ENCODE measurements at regions of chr9 and their contacts with region 1.

Region 1: GRCh38 chr9:14616188-14616982 is 76.8 kb downstream of the ZDHHC21 start:
- DNase-seq: peak; percentile 32
- ATAC-seq: peak; percentile 64; the same call in 1 of the 2 replicates
- H3K4me3 ChIP-seq: no peak overlapping the region
- H3K27ac ChIP-seq: no peak overlapping the region
- H3K4me1 ChIP-seq: no peaks in the 10 kb centered on the region
- H3K27me3 ChIP-seq: no peaks in the 10 kb centered on the region
- CTCF ChIP-seq: peak; percentile 57 to 73 (median 59); a peak in 5 of 6 replicates
- POLR2A ChIP-seq: no peak
- RAD21 ChIP-seq: peak; percentile 60

Region 2: GRCh38 chr9:13770956-13771355 is 845.4 kb before region 1 on chr9:
- CTCF ChIA-PET with region 1: no interaction called
- POLR2A ChIA-PET with region 1: no interaction called
- RAD21 ChIA-PET with region 1: no interaction called
- intact Hi-C with region 1: no loop called
- DNase-seq: no peak
- ATAC-seq: no peak
- H3K4me3 ChIP-seq: no peak overlapping the region
- H3K27ac ChIP-seq: no peak overlapping the region
- H3K4me1 ChIP-seq: no peaks in the 10 kb centered on the region
- H3K27me3 ChIP-seq: no peaks in the 10 kb centered on the region
- CTCF ChIP-seq: no peak
- POLR2A ChIP-seq: no peak
- RAD21 ChIP-seq: no peak

Region 3: DNA sequence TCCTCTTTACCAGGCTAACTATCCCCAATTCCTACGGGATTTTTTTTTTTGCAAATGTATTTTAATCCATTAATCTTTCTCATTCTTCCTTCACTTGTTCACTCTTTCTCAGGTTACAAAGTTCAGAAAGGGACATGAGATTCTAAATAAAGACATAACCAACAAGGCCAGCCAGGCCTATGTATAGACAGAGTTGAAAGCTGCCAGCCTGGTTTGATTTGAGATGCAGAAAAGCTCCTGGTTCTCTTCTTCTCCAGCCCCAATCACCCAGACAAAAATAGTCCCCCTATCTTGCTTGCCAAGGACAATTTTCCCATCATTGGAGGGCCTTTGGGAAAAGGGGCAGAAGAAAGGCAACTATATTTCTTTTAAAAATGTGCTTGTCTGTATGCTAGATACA is 701.3 kb before region 1 on chr9:
- CTCF ChIA-PET with region 1: no interaction called
- POLR2A ChIA-PET with region 1: no interaction called
- RAD21 ChIA-PET with region 1: no interaction called
- intact Hi-C with region 1: no loop called
- DNase-seq: no peak
- ATAC-seq: no peak
- H3K4me3 ChIP-seq: no peak overlapping the region
- H3K27ac ChIP-seq: no peak overlapping the region
- H3K4me1 ChIP-seq: no peaks in the 10 kb centered on the region
- H3K27me3 ChIP-seq: no peaks in the 10 kb centered on the region
- CTCF ChIP-seq: no peak
- POLR2A ChIP-seq: no peak
- RAD21 ChIP-seq: no peak

Region 4: DNA sequence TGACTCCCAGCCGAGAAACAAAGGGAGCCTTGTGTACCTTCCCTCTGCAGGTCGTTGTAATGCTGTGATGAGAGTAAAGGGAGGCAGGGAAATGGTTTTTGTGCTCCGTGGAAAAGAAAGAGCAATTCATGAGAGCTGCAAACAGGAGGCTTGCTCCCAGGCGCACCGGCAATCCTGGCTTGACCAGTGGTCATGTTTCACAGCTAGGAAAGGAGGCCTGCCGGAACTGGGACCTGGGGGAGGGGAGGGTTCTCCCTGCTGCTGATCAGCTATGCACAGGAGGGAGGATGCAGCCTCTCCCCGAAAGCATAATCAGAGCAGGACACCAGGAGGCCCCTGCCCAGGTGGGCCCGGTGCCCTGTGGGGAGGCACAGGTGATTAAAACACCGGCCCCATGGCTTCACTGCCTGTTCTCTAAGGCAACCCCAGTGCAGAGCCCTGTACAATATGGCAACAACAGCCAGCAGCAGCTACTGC is 54.4 kb before region 1 on chr9:
- CTCF ChIA-PET with region 1: no interaction called
- POLR2A ChIA-PET with region 1: no interaction called
- RAD21 ChIA-PET with region 1: no interaction called
- intact Hi-C with region 1: no loop called
- DNase-seq: no peak
- ATAC-seq: no peak
- H3K4me3 ChIP-seq: no peak overlapping the region
- H3K27ac ChIP-seq: no peak overlapping the region
- H3K4me1 ChIP-seq: no peaks in the 10 kb centered on the region
- H3K27me3 ChIP-seq: no peaks in the 10 kb centered on the region; the same call in 1 of the 2 replicates
- CTCF ChIP-seq: no peak
- POLR2A ChIP-seq: no peak
- RAD21 ChIP-seq: no peak

Region 5: GRCh38 chr9:14652729-14653377 is 36.5 kb after region 1 on chr9:
- CTCF ChIA-PET with region 1: no interaction called
- POLR2A ChIA-PET with region 1: no interaction called
- RAD21 ChIA-PET with region 1: no interaction called
- intact Hi-C with region 1: loop called (anchors 5 kb)
- DNase-seq: no peak
- ATAC-seq: peak; percentile 63
- H3K4me3 ChIP-seq: no peak overlapping the region
- H3K27ac ChIP-seq: no peak overlapping the region
- H3K4me1 ChIP-seq: no peaks in the 10 kb centered on the region
- H3K27me3 ChIP-seq: no peaks in the 10 kb centered on the region
- CTCF ChIP-seq: peak in 2 of 3 experiments; percentile 55 to 56; a peak in 4 of 6 replicates
- POLR2A ChIP-seq: no peak
- RAD21 ChIP-seq: peak; percentile 20; the same call in 1 of the 2 replicates

Region 6: GRCh38 chr9:15155826-15156225 is 539.4 kb after region 1 on chr9:
- CTCF ChIA-PET with region 1: no interaction called
- POLR2A ChIA-PET with region 1: no interaction called
- RAD21 ChIA-PET with region 1: no interaction called
- intact Hi-C with region 1: no loop called
- DNase-seq: no peak
- ATAC-seq: no peak
- H3K4me3 ChIP-seq: no peak overlapping the region
- H3K27ac ChIP-seq: no peak overlapping the region
- H3K4me1 ChIP-seq: no peaks in the 10 kb centered on the region
- H3K27me3 ChIP-seq: no peaks in the 10 kb centered on the region
- CTCF ChIP-seq: no peak
- POLR2A ChIP-seq: no peak
- RAD21 ChIP-seq: no peak

Measured in HCT116 (cell line).